Activated CD4-positive, alpha-beta T cell treated with anti-CD3 and anti-CD28 coated beads, Interleukin-2, amount 10 ng/mL, durations not matched to agents 24 days and 14 days (primary cell): ENCODE measurements at regions of chr3 and their contacts with region 1.

Region 1: GRCh38 chr3:129183569-129184395 is at the start of gene CNBP:
- DNase-seq: peak; percentile 98
- H3K4me3 Mint-ChIP-seq: peak within 1 kb of the TSS; percentile 96
- H3K27ac Mint-ChIP-seq: peak within 1 kb of the TSS; percentile 99
- H3K4me1 Mint-ChIP-seq: peaks cover 33% of the 10 kb centered on the region
- H3K27me3 Mint-ChIP-seq: no peaks in the 10 kb centered on the region
- total RNA-seq, gene CNBP: 422 and 430 TPM in 2 replicates

Region 2: DNA sequence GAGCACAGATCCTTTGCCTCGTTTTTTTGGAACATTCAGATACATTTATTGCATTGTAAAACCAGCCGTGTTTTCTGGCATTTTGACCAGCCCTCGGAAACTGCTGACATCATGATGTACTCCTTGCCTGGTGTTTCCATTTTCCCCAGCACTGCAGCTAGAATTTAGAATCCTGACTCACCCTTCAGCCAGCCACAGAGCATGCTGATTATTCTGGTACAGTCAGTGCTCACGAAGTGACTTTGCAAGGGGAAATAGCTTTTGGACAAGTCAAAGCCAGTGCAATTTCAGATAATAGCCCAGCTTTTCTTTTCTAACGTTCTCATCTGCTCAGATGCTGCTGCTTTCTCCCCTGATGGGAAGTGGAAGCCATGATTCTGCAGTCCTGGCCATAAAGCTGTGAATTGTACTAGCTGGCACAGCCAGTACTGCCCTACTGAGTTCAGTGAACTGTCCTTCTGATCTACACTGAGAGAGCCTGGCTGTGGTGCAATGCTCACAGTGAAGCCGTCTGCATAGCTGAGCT is 12.0 kb after region 1 on chr3:
- intact Hi-C with region 1: no loop called
- DNase-seq: no peak
- H3K4me3 Mint-ChIP-seq: no peak overlapping the region
- H3K27ac Mint-ChIP-seq: peak overlapping the region; percentile 58
- H3K4me1 Mint-ChIP-seq: peaks cover 16% of the 10 kb centered on the region
- H3K27me3 Mint-ChIP-seq: no peaks in the 10 kb centered on the region

Region 3: DNA sequence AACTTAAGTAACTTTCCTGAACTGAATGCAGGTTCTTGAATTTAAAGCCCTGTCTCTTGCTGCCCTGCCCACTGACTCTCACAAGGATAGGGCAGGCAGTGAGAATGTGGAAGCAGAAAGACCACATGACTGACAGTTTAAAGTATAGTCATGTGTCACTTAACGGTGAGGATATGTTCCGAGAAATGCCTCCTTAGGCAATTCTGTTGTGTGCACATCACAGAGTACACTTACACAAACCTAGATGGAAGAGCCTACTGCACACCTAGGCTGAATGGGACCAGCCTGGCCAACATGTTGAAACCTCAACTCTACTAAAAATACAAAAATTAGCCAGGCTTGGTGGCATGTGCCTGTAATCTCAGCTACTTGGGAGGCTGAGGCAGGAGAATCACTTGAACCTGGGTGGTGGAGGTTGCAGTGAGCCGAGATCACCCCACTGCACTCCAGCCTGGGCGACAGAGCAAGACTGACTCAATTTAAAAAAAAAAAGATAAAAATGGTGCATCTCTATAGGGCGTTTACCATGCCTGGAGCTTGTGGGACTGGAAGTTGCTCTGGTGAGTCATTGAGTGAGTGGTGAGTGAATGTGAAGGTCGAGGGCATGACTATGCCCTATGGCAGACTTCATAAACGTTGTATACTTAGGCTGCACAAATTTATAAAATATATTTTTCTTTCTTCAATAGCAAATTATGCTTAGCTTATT is 46.7 kb after region 1 on chr3:
- intact Hi-C with region 1: loop called (anchors 1 kb)
- DNase-seq: peak; percentile 81
- H3K4me3 Mint-ChIP-seq: peak overlapping the region; percentile 59
- H3K27ac Mint-ChIP-seq: peak overlapping the region; percentile 88
- H3K4me1 Mint-ChIP-seq: peaks cover 67% of the 10 kb centered on the region
- H3K27me3 Mint-ChIP-seq: no peaks in the 10 kb centered on the region

Region 4: DNA sequence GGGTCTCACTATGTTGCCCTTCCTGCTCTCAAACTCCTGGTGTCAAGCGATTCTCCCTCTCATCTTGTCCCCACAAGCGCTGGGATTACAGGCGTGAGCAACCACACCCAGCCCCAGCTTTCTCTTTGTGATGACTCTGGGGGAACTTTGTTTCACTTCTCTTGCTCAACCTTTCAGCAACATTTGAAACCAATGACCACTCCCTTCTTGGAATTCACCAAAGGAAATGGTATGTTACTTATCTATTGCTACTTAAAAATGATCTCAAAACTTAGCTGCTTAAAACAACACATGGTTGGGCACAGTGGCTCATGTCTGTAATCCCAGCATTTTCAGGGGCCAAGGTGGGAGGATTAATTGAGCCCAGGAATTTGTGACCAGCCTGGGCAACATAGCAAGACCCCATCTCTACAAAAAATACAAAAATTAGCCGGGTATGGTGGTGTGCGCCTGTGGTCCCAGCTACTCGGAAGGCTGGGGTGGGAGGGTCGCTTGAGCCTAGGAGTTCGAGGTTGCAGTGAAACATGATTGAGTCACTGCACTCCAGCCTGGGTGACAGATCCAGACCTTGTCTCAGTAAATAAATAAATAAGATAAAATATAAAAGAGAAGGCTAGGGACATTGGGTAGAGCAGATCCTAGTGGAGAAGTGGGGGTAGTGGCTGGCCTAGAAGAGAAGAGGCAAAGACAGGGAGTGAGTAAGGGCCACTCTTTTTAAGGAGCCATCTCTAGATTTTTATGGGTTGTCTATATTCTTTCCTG is 55.3 kb after region 1 on chr3:
- intact Hi-C with region 1: loop called (anchors 2 kb)
- DNase-seq: peak; percentile 89
- H3K4me3 Mint-ChIP-seq: peak overlapping the region; percentile 71
- H3K27ac Mint-ChIP-seq: peak overlapping the region; percentile 92
- H3K4me1 Mint-ChIP-seq: peaks cover 38% of the 10 kb centered on the region
- H3K27me3 Mint-ChIP-seq: no peaks in the 10 kb centered on the region

Region 5: DNA sequence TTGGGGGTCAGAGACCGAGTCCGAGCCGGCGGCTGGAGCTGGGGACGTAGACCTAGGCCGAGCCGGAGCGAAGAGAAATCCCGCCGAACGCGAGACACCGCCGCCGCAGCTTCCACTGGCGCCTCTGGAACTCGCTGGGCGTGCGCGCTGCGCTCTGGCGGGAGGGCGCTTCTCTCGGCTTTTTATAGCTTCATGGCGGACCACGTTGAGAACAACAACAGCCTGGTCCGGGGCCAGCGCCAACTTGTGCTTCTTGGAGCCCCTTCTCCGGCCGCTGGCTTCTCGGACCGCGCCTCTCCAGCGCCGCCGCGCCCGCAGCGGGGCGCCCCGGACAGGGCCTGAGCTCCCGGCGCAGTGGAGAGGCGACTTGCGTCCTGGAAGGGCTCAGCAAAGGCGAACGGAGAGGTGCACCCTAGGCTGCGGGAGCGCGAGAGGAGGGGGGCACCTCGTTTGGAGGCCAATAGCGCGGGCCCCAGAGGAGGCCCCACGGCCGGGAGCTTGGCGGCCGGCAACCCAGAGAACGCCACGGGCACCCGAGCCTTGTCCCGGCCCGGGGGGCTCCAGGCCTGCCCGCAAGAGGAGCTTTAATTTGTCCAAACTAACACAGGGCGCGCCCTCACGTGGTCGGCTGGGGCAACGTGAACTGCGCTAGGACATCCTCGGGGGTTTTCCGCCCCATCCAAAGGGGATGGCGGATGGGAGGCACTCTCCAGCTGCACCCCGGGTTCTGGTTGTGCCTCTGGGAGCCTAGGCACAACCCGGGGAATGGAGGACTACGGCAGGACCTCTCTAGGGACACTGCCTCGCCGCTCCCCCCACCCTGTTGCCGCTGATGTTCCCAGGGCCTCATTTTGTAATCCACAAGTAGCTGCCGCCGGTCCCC is 132.6 kb after region 1 on chr3:
- intact Hi-C with region 1: loop called (anchors 2 kb)
- DNase-seq: peak; percentile 98
- H3K4me3 Mint-ChIP-seq: peak overlapping the region; percentile 92
- H3K27ac Mint-ChIP-seq: peak overlapping the region; percentile 74
- H3K4me1 Mint-ChIP-seq: peaks cover 27% of the 10 kb centered on the region
- H3K27me3 Mint-ChIP-seq: no peaks in the 10 kb centered on the region